ENCODE measurements at regions of chr19 and their contacts with region 1.

Region 1: DNA sequence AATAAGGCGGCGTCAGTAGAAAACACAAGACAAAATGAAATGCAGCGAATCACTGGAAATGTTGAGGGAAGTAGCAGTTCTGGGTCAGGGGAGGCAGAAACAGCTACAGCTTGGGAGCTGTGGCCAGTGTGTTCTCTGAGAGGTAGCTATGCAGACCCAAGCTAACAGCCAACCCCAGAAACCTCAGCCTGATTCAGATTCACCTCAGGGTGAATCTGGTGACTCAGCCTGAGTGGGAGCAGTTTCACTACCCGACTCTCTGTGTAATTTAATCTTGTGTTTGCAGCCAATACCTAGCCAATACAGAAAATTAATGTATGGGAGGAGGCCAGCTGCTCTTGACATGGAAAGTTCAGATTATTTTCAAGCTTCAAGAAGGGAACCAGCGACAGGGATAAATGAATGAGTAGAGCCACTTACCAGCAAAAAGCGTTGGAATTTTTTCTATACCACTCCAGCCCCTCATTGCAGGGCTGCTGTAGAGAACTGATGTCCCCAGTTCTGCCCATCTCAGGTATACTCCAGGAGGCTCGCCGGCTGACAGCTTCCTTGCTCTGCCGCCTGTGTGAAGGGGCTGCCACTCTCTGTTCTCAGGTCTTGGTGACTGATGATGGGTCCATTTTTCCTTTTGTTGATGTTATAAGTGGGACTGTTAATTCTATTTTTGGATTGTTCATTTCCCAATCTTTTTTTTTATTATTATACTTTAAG is 8.9 kb downstream of the IGFL3 start:
- DNase-seq: peak; percentile 94
- H3K4me3 Mint-ChIP-seq: peak overlapping the region; percentile 19
- H3K27ac Mint-ChIP-seq: peak overlapping the region; percentile 82
- H3K4me1 Mint-ChIP-seq: peaks cover 22% of the 10 kb centered on the region
- H3K27me3 Mint-ChIP-seq: no peaks in the 10 kb centered on the region
- CTCF ChIP-seq: no peak

Region 2: GRCh38 chr19:46040125-46040524 is 75.4 kb before region 1 on chr19:
- CTCF ChIA-PET with region 1: no interaction called
- POLR2A ChIA-PET with region 1: no interaction called
- intact Hi-C with region 1: no loop called
- DNase-seq: no peak
- H3K4me3 Mint-ChIP-seq: no peak overlapping the region
- H3K27ac Mint-ChIP-seq: no peak overlapping the region
- H3K4me1 Mint-ChIP-seq: peaks cover 12% of the 10 kb centered on the region
- H3K27me3 Mint-ChIP-seq: peaks cover 37% of the 10 kb centered on the region
- CTCF ChIP-seq: no peak

Region 3: GRCh38 chr19:46133101-46133682 is 17.6 kb after region 1 on chr19:
- CTCF ChIA-PET with region 1: interaction called, 3 read pairs
- POLR2A ChIA-PET with region 1: interaction called, 22 read pairs
- intact Hi-C with region 1: no loop called
- DNase-seq: peak; percentile 95
- H3K4me3 Mint-ChIP-seq: peak overlapping the region; percentile 62
- H3K27ac Mint-ChIP-seq: peak overlapping the region; percentile 99
- H3K4me1 Mint-ChIP-seq: peaks cover 27% of the 10 kb centered on the region
- H3K27me3 Mint-ChIP-seq: no peaks in the 10 kb centered on the region
- CTCF ChIP-seq: no peak

Region 4: DNA sequence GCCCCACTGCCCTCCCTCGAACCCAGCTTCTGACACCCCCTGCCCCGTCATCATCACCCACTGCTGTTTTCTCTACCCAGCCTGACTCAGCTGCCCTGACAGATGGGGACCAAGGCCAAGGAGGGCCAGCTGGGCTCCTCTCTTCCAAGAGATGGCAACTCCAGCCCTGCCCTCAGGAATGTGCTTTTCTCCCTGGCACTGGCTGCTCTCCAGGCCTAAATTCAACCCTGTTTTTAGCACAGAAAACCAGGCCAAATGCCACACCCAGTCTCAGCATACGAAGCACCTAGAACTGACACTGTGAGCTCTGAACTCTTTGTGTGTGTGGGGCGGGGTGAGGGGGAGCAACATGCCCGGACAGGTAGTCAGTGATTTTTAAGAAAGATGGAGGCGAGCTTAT is 90.6 kb after region 1 on chr19:
- CTCF ChIA-PET with region 1: no interaction called
- POLR2A ChIA-PET with region 1: interaction called, 13 read pairs
- intact Hi-C with region 1: no loop called
- DNase-seq: peak; percentile 96
- H3K4me3 Mint-ChIP-seq: no peak overlapping the region
- H3K27ac Mint-ChIP-seq: peak overlapping the region; percentile 40
- H3K4me1 Mint-ChIP-seq: peaks cover 55% of the 10 kb centered on the region
- H3K27me3 Mint-ChIP-seq: no peaks in the 10 kb centered on the region
- CTCF ChIP-seq: no peak

Measured in MCF 10A (cell line).